ENCODE measurements at regions of chr20 and their contacts with region 1.

Region 1: DNA sequence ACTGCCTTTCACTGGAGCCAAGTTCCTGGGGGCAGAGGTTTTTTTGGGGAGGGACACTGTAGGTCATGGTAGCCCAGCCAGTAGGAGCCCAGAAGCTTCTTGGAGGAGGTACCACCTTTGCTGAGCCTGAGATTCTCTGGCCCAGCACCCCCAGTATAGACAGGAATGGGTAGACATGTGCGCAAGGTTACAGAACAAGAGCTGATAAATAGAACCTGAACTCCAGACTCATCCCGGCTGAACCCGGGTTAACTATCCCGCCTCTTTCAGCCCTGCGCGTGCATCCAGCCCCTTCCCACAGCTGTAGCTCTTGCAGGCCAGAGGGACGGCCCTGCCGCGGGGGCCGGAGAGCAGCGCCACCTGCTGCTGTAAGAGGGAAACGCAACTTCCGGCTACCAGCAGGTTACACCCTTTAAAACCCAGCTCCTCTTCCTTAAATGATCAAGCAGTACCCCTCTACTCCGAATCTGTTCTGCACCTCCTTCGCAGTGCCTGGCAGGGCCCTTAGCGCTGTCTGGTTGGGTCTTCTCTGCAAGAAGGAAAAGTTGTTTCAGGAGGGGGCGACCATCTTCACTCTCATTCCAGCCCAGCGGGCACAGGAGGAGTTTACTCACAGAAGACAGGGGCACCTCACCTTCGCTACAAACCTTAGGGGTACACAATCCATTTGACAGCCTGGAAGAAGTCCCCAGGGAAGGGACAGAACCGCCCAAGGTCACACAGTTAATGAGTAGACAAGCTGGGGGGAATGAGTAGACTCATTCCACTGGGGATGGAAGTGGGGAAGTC is 7.5 kb downstream of the SRXN1 start:
- DNase-seq: peak; percentile 75
- ATAC-seq: peak; percentile 91
- H3K4me3 Mint-ChIP-seq: no peak overlapping the region
- H3K27ac Mint-ChIP-seq: no peak overlapping the region
- H3K4me1 Mint-ChIP-seq: peaks cover 12% of the 10 kb centered on the region
- H3K27me3 Mint-ChIP-seq: peaks cover 16% of the 10 kb centered on the region
- CTCF ChIP-seq: peak; percentile 98

Region 2: DNA sequence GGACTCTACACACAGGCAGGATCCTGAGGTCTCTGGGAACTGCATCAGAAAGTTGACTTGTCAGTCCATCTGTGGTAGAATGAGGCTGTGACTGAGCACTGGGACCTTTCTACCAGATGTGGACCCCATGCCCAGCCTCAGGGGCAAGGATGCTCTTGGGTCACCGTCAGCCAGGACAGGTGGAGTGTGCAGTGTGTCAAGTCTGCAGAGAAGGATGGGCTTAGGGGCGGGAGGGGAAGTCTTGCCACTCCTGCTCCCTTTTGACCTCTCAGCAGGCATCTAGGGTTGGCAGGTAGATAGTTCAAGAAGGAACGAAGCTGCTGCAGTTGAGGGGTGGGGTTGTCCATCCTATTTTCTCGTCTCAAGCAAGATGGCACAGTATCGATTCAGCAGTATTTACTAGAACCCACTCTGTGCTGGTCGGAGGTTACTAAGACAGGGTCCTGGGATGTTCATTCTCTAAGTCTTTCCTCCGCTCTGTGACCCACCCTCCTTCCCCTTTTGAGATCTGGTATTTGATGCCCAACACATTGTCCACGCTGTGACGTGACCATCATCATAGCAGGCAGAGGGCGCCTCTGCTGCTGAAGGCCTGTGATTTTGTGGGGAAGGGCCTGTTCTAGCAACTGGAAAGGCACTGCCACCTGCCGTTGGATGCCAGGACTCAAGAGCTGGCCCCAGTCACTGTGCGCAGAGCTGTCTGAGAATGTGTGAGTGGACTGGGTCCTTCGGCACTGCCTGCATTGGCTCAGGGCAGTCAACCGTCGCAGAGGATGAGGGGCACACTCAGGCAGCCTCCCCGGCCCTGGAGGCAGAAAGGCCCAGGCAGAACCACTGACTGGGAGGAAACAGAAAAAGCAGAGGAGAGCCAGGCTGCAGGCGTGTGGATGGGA is 214.3 kb before region 1 on chr20:
- CTCF ChIA-PET with region 1: no interaction called
- POLR2A ChIA-PET with region 1: no interaction called
- intact Hi-C with region 1: no loop called
- DNase-seq: peak; percentile 67
- ATAC-seq: no peak
- H3K4me3 Mint-ChIP-seq: no peak overlapping the region
- H3K27ac Mint-ChIP-seq: peak overlapping the region; percentile 86
- H3K4me1 Mint-ChIP-seq: peaks cover 65% of the 10 kb centered on the region
- H3K27me3 Mint-ChIP-seq: no peaks in the 10 kb centered on the region
- CTCF ChIP-seq: peak; percentile 22

Region 3: GRCh38 chr20:543369-544152 is 102.0 kb before region 1 on chr20 and contains the start of gene CSNK2A1:
- CTCF ChIA-PET with region 1: interaction called, 31 read pairs
- POLR2A ChIA-PET with region 1: no interaction called
- intact Hi-C with region 1: no loop called
- DNase-seq: peak; percentile 96
- ATAC-seq: peak; percentile 96
- H3K4me3 Mint-ChIP-seq: peak within 1 kb of the TSS; percentile 88
- H3K27ac Mint-ChIP-seq: peak within 1 kb of the TSS; percentile 96
- H3K4me1 Mint-ChIP-seq: peaks cover 49% of the 10 kb centered on the region
- H3K27me3 Mint-ChIP-seq: peaks cover 2% of the 10 kb centered on the region
- CTCF ChIP-seq: no peak
- total RNA-seq, gene CSNK2A1: 169 to 174 TPM

Region 4: DNA sequence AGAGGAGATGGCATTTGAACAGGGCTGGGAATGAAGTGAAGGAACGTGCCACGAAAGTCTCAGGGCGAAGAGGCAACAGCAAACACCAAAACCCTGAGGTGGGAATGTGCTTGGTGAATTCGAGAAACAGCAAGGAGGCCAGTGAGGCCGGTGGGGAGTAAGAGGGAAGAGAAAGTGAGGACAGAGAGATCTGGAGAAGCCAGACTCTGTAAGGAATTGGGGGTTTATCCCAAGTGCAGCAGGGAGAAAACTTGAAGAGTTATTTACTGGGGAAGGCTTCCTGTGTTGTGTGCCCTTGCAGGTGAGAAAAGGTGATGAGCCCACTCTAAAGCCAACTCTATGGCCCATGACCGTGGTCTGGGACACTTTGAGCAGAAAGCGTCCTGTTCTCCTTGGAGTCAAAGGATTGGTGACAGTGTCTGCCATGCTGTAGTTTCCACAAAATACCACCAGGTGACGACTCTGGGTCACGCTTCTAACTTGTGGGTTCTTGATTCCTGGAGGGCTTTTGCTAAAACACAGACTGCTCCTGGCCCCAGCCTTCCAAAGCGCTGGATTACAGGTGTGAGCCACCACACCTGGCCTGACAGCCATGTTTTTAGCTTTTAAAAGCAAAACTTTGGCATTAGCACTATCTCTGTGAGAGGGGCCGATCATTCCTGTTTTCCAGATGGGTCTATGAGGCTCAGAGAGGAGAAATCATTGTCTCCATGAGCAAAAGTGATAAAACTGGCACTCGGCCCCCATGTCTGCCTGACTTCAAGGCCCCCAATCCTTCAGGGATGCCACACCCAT is 83.9 kb before region 1 on chr20:
- CTCF ChIA-PET with region 1: interaction called, 56 read pairs
- POLR2A ChIA-PET with region 1: no interaction called
- intact Hi-C with region 1: loop called (anchors 2 kb)
- DNase-seq: peak; percentile 74
- ATAC-seq: peak; percentile 87
- H3K4me3 Mint-ChIP-seq: no peak overlapping the region
- H3K27ac Mint-ChIP-seq: no peak overlapping the region
- H3K4me1 Mint-ChIP-seq: no peaks in the 10 kb centered on the region
- H3K27me3 Mint-ChIP-seq: peaks cover 5% of the 10 kb centered on the region
- CTCF ChIP-seq: peak; percentile 82

Region 5: DNA sequence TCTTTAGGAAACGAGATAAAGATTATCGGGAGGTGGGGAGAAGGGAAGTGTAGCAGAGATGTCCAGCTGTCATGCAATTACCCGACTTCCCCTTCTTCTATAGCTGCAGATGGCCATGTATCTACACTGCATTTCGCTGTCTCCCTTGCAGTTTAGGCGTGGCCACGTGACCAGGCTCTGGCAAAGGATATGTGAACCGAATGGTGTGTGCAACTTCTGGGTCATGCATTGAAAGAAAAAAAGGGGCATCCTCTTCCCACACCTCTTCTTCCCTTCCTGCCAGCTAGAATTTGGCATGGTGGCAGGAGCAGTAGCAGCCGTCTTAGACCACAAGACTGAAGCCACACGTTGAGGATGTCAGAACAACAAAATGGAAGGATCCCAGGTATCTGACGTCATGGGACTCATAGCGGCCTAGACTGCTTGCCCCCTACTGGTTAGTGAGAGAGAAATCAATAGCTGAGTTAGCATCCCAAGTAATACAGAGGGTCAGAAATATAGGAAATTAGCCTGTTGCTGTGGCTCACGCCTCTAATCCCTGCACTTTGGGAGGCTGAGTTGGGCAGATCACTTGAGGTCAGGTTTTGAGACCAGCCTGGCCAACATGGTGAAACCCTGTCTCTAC is 68.2 kb before region 1 on chr20:
- CTCF ChIA-PET with region 1: interaction called, 13 read pairs
- POLR2A ChIA-PET with region 1: no interaction called
- intact Hi-C with region 1: no loop called
- DNase-seq: no peak
- ATAC-seq: no peak
- H3K4me3 Mint-ChIP-seq: no peak overlapping the region
- H3K27ac Mint-ChIP-seq: no peak overlapping the region
- H3K4me1 Mint-ChIP-seq: no peaks in the 10 kb centered on the region
- H3K27me3 Mint-ChIP-seq: peaks cover 20% of the 10 kb centered on the region
- CTCF ChIP-seq: no peak

Region 6: GRCh38 chr20:1105599-1106194 is 460.2 kb after region 1 on chr20:
- CTCF ChIA-PET with region 1: no interaction called
- POLR2A ChIA-PET with region 1: no interaction called
- intact Hi-C with region 1: no loop called
- DNase-seq: no peak
- ATAC-seq: no peak
- H3K4me3 Mint-ChIP-seq: no peak overlapping the region
- H3K27ac Mint-ChIP-seq: no peak overlapping the region
- H3K4me1 Mint-ChIP-seq: no peaks in the 10 kb centered on the region
- H3K27me3 Mint-ChIP-seq: no peaks in the 10 kb centered on the region
- CTCF ChIP-seq: no peak